Activated T-helper 1 cell treated with anti-CD3 and anti-CD28 coated beads, Interleukin-12 subunit alpha, Interleukin-12 subunit beta, Interleukin-2, Interleukin-4 antibody, amounts not matched to agents 30 ng/mL and 10 ng/mL and 1 ng/mL, durations not matched to agents 14 hours and 24 hours and 36 hours (primary cell): ENCODE measurements at regions of chrX and their contacts with region 1.

Region 1: DNA sequence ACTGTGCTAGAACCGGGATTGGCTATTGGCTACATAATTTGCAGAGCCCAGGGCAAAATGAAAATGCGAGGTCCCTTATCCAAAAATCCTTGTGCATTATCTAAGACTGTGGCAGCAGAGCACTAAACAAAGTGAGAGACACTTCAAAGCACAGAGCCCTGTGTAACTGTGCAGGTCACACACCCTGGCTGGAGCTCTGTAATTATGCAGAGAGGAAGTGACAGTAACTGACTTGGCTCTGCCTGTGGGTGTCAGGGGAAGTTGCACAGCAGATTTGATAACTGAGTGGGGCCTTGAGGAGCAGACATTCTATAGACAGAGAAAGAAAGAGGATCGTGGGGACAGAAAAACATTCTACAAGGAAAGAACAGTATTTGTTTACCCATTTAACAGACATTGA is 173.5 kb upstream of the FMR1 start:
- DNase-seq: peak; percentile 1
- H3K4me3 Mint-ChIP-seq: peak overlapping the region; percentile 40
- H3K27ac Mint-ChIP-seq: peak overlapping the region; percentile 84
- H3K4me1 Mint-ChIP-seq: peaks cover 33% of the 10 kb centered on the region
- H3K27me3 Mint-ChIP-seq: no peaks in the 10 kb centered on the region

Region 2: GRCh38 chrX:147763131-147763530 is 24.9 kb after region 1 on chrX:
- intact Hi-C with region 1: loop called (anchors 1 kb)
- DNase-seq: no peak
- H3K4me3 Mint-ChIP-seq: no peak overlapping the region
- H3K27ac Mint-ChIP-seq: peak overlapping the region; percentile 50
- H3K4me1 Mint-ChIP-seq: peaks cover 25% of the 10 kb centered on the region
- H3K27me3 Mint-ChIP-seq: peaks cover 1% of the 10 kb centered on the region

Region 3: GRCh38 chrX:147779173-147779572 is 40.9 kb after region 1 on chrX:
- intact Hi-C with region 1: loop called (anchors 5 kb)
- DNase-seq: no peak
- H3K4me3 Mint-ChIP-seq: no peak overlapping the region
- H3K27ac Mint-ChIP-seq: no peak overlapping the region
- H3K4me1 Mint-ChIP-seq: peaks cover 8% of the 10 kb centered on the region
- H3K27me3 Mint-ChIP-seq: no peaks in the 10 kb centered on the region